SK-N-SH (cell line): ENCODE measurements at regions of chr3 and their contacts with region 1.

Region 1: GRCh38 chr3:4986782-4987537 is 7.7 kb downstream of the BHLHE40 start:
- DNase-seq: peak; percentile 92
- H3K4me3 ChIP-seq: peak overlapping the region; percentile 39 to 49
- H3K27ac ChIP-seq: peak overlapping the region; percentile 90 to 95
- H3K4me1 ChIP-seq: peaks cover 40 to 50% of the 10 kb centered on the region in 2 experiments
- H3K27me3 ChIP-seq: no peaks in the 10 kb centered on the region
- CTCF ChIP-seq: peak; percentile 19; the same call in 1 of the 2 replicates
- EP300 ChIP-seq: peak; percentile 80 to 83
- RAD21 ChIP-seq: peak; percentile 28

Region 2: GRCh38 chr3:4845882-4846281 is 141.1 kb before region 1 on chr3:
- CTCF ChIA-PET with region 1: no interaction called
- POLR2A ChIA-PET with region 1: no interaction called
- DNase-seq: no peak
- H3K4me3 ChIP-seq: no peak overlapping the region
- H3K27ac ChIP-seq: no peak overlapping the region
- H3K4me1 ChIP-seq: peaks cover 0 to 17% of the 10 kb centered on the region in 2 experiments; a peak in 2 of 4 replicates
- H3K27me3 ChIP-seq: no peaks in the 10 kb centered on the region
- CTCF ChIP-seq: no peak
- EP300 ChIP-seq: no peak
- RAD21 ChIP-seq: no peak

Region 3: DNA sequence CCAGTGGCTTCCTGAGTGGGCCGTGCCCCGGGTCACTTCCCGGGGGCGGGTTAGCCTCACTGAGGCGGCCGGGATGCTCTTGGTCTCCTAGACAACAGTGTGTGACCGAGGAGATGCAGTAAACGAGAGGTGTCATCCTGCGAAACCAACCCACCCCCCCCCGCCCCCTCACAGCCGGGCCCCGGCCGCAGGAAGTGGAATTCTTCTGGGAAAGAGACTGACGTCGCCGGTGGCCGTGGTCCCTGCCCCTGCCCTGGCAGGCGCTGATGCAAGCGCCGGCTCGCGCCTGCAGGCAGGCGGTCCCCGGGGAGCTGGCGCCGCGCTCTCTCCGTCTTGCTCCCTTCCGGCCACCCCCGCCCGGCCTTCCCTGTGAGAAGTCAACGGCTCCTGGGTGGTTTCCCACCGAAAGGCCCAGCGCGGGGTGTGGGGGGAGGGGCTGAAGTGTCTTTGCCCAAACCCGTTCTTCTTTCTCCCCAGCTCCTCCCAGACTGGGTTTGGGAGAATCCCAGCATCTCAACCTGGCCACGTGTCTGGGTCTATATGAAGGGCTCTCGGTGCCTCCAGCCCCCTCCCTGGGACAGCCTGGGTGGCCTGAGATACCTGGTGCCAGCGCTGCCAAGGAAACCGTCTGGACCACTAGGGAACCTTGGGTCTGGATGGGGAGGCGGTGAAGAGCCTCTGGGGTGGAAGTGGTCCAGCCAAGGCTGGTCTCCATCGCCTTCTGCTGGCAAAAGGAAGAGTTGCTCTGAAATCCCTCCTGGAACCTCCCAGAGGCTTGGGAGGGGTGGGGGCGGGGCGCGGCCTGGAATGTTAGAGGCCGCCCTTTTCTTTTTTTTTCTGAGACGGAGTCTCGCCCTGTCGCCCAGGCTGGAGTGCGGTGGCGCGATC is 39.6 kb after region 1 on chr3:
- CTCF ChIA-PET with region 1: interaction called, 7 read pairs
- POLR2A ChIA-PET with region 1: interaction called, 16 read pairs
- DNase-seq: peak; percentile 91
- H3K4me3 ChIP-seq: peak overlapping the region; percentile 53 to 70
- H3K27ac ChIP-seq: peak overlapping the region; percentile 92 to 95
- H3K4me1 ChIP-seq: peaks cover 18 to 19% of the 10 kb centered on the region in 2 experiments; a peak in 2 of 4 replicates
- H3K27me3 ChIP-seq: no peaks in the 10 kb centered on the region
- CTCF ChIP-seq: peak; percentile 74
- EP300 ChIP-seq: peak in 1 of 2 experiments; percentile 46; a peak in 1 of 4 replicates
- RAD21 ChIP-seq: peak; percentile 91